Left cardiac atrium (tissue), 4 donors: ENCODE measurements at regions of chr16 and their contacts with region 1.

Region 1: DNA sequence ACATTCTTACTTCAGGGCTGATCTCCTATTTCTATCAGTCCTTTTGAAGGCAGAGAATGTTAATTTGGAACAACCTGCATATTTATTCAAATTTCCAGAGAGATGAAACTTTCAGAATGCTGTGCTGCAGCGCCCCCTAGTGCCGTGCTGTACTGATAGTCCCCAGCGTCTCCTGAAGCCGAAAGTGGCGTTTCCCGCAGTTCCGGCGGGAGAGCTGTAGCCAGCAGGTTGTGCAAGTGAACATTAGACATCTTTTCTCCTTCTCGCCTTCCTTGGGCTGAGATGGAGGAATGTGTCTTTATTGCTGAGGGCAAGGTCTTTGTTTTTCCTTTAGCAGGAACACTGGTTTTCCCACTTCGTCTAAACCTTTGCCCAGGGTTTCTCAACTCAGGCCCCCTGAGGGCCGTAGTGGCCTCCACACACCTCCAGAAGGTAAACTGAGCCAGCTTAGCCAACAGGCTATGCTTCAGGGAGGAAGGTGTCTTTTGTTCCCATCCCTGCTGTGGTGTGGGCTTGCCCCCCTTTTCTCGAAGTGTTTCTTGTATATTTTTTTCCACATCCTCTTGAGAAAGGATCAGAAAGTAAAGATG is 26.4 kb downstream of the USP10 start:
- DNase-seq: peak; percentile 91
- ATAC-seq: peak; percentile 82 to 85

Region 2: GRCh38 chr16:84239141-84239769 is 486.9 kb before region 1 on chr16:
- intact Hi-C with region 1: no loop called
- DNase-seq: no peak
- ATAC-seq: no peak

Region 3: DNA sequence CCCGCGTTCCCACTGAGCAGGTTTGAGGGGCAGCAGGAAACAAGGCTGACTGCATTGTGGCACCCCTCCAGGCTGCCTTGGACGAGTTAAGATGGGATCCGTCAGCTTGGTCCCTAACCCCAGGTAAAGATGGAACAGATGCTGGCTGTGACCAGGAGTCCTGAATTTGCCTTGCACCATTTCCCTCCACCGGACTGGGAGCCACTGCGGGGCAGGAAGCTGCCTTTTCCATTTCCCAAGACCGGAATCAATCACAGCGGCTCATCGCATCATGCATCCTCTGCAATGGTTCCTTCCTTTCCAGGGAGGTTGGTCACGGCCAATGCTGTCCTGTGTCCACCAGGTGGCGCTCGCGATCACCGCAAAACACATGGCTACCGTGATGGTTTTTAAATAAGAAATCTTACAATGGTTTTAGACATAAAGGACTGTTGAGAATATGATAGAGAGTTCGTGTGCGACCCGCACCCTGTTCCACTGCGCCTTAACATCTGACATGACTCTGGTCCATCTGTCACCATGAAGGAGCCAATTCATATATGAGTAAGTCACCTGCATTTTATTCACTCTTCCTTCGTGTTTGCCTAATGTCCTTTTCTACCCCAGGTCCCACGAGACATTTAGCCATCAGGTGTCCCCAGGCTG is 214.9 kb before region 1 on chr16:
- intact Hi-C with region 1: loop called (anchors 5 to 10 kb)
- DNase-seq: peak; percentile 86
- ATAC-seq: peak; percentile 77 to 80

Region 4: DNA sequence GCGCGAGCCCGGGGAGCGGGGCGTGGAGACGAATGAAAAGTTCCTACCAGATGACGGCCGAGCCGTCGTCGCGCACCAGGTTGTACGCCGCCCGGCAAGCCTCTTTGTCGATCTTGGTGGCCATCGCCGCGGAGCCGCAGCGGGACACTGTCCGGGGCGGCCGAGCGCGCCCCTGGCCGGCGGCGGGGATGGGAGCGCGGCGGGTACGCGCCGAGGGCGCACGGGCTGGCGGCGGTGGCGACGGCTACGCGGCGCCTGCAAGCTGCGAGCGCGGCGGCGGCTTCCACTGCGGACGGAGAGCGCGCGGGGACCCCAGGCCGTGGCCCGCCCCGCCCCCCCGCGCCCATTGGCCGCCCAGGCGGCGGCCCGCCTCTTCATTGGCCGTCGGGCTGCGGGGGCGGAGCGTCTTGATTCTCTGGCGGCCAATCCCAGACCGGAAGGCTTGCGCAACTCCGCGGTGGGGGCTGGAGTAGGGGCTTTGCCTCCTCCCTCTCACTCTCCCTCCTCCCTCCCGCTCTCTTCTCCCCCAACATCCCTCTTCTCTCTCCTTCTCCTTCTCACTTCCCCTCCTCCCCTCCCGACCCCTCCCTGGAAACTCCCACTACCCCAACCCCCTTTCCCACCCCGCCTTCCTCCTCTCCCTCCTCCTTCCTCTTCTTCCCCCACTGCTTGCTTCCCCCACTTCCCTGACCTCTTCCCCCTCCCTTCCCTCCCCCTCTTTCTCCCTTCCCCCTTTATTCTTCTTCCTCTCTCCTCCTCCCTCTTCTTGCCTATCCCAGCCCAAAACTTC is 108.2 kb before region 1 on chr16 and contains the start of gene COTL1:
- intact Hi-C with region 1: loop called (anchors 5 to 10 kb)
- DNase-seq: peak; percentile 99
- ATAC-seq: peak; percentile 92 to 95
- total RNA-seq, gene COTL1: 37.3 to 43.9 TPM

Region 5: GRCh38 chr16:84629580-84629979 is 96.6 kb before region 1 on chr16:
- intact Hi-C with region 1: loop called (anchors 5 to 10 kb)
- DNase-seq: no peak
- ATAC-seq: no peak

Region 6: GRCh38 chr16:84672276-84673202 is 53.6 kb before region 1 on chr16:
- intact Hi-C with region 1: loop called (anchors 1 to 5 kb)
- DNase-seq: peak; percentile 81
- ATAC-seq: peak; percentile 86 to 88

Region 7: GRCh38 chr16:84687715-84688114 is 38.5 kb before region 1 on chr16:
- intact Hi-C with region 1: no loop called
- DNase-seq: no peak
- ATAC-seq: peak in 1 of 2 donors; percentile 31